Aorta (tissue), 5 donors: ENCODE measurements at regions of chr10 and their contacts with region 1.

Region 1: DNA sequence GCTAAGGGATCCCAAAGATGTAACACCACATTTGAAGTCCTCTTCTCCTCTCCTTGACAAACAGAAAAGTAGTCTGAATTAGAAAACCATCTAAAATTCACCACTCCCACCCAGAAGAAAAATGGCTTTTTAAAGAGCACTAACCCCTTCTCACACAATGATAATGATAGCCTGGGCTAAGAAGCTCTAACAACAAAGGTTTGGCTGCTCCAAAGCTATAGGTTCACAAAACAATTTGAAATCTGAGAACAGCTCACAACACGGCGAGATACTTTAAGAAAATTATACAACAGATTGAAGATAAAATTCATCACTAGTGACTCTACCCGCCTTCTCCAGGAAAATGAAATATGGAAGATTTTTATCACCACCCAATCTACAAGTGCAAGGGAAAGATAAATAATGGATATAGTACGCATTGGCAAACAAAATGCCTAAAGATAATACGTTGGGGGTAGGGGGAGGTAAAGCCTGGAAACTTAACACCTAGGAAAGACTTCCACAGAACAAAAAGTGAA is 7.4 kb downstream of the ITGB1 start:
- DNase-seq: no peak
- ATAC-seq: no peak
- H3K4me3 ChIP-seq: no peak overlapping the region
- H3K27ac ChIP-seq: no peak overlapping the region
- H3K4me1 ChIP-seq: peaks cover 3 to 19% of the 10 kb centered on the region in 2 donors
- H3K27me3 ChIP-seq: no peaks in the 10 kb centered on the region

Region 2: GRCh38 chr10:32938554-32939061 is 12.0 kb before region 1 on chr10:
- intact Hi-C with region 1: loop called in 1 of 2 experiments (anchors 1 kb)
- DNase-seq: no peak
- ATAC-seq: peak; percentile 53
- H3K4me3 ChIP-seq: no peak overlapping the region
- H3K27ac ChIP-seq: peak overlapping the region; percentile 14 to 79
- H3K4me1 ChIP-seq: peaks cover 16 to 17% of the 10 kb centered on the region in 2 donors
- H3K27me3 ChIP-seq: no peaks in the 10 kb centered on the region